ENCODE measurements at regions of chr12 and their contacts with region 1.

Region 1: GRCh38 chr12:30853561-30854133 is 72.9 kb upstream of the TSPAN11 start:
- DNase-seq: peak in 2 of 3 donors; percentile 45 to 52
- ATAC-seq: peak; percentile 22 to 51
- H3K4me3 ChIP-seq: no peak overlapping the region
- H3K27ac ChIP-seq: no peak overlapping the region
- H3K4me1 ChIP-seq: peaks cover 3% of the 10 kb centered on the region
- H3K27me3 ChIP-seq: no peaks in the 10 kb centered on the region

Region 2: DNA sequence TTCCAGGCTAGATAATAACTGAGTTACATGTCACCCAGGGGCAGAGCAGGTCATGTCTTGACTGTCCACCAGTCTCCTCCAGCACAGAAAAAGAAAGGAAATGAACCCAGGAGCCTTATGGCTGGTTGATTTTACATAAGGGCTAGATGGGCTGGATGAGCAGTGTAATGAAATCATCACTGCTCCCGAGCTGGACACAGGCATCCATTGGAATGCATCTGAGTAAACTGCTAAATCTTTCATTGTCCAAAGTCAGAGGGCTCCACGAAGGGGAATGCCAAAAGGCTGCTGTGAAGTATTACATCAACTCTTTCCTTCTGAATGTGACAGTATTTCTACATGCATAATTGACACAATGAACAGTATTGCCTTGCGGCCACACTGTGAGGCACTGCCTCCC is 42.8 kb after region 1 on chr12:
- intact Hi-C with region 1: no loop called
- DNase-seq: no peak
- ATAC-seq: peak in 1 of 2 donors; percentile 18
- H3K4me3 ChIP-seq: no peak overlapping the region
- H3K27ac ChIP-seq: no peak overlapping the region
- H3K4me1 ChIP-seq: no peaks in the 10 kb centered on the region
- H3K27me3 ChIP-seq: no peaks in the 10 kb centered on the region

Region 3: GRCh38 chr12:30985814-30986452 is 132.3 kb after region 1 on chr12:
- intact Hi-C with region 1: loop called (anchors 2 to 5 kb)
- DNase-seq: peak; percentile 30 to 76 (median 76)
- ATAC-seq: peak; percentile 61 to 62
- H3K4me3 ChIP-seq: no peak overlapping the region
- H3K27ac ChIP-seq: no peak overlapping the region
- H3K4me1 ChIP-seq: no peaks in the 10 kb centered on the region
- H3K27me3 ChIP-seq: no peaks in the 10 kb centered on the region

Region 4: DNA sequence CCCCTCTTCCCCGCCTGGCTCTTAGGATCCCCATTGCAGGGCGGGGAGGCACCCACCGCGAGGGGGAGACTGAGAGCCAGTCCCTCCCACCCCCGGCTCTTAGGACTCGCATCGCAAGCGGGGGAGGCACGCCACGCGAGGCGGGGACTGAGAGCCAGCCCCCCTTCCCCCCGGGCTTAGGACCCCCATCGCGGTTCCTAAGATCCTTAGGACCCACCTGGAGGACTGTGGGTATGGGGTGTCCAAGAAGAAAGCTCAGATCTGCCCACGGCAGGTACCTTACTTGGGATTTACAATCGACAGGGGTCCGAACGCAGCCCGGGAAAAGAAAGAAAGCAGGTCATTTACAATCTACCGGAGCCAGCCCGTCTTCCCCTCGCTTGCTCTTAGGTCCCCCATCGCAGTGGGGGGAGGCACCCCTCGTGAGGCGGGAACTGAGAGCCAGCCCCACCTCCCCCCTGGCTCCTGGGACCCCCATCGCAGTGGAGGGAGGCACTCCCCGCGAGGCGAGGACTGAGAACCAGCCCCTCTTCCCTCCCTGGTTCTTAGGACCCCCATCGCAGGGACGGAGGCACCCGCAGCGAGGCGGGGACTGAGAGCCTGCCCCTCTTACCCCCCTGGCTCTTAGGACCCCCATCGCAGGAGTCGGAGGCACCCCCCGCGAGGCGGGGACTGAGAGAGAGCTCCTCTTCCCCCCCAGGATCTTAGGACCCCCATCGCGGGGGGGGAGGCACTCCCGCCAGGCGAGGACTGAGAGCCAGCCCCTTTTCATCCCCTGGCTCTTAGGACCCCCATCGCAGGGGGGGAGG is 263.8 kb after region 1 on chr12:
- intact Hi-C with region 1: no loop called
- DNase-seq: peak; percentile 50 to 70 (median 70)
- ATAC-seq: peak; percentile 77 to 78
- H3K4me3 ChIP-seq: peak overlapping the region; percentile 35
- H3K27ac ChIP-seq: no peak overlapping the region
- H3K4me1 ChIP-seq: no peaks in the 10 kb centered on the region
- H3K27me3 ChIP-seq: no peaks in the 10 kb centered on the region

Measured in right cardiac atrium (tissue), 5 donors.